Activated T-helper 1 cell treated with anti-CD3 and anti-CD28 coated beads, Interleukin-12 subunit alpha, Interleukin-12 subunit beta, Interleukin-2, Interleukin-4 antibody, amounts not matched to agents 30 ng/mL and 10 ng/mL and 1 ng/mL, durations not matched to agents 14 hours and 24 hours and 36 hours (primary cell): ENCODE measurements at regions of chr1 and their contacts with region 1.

Region 1: DNA sequence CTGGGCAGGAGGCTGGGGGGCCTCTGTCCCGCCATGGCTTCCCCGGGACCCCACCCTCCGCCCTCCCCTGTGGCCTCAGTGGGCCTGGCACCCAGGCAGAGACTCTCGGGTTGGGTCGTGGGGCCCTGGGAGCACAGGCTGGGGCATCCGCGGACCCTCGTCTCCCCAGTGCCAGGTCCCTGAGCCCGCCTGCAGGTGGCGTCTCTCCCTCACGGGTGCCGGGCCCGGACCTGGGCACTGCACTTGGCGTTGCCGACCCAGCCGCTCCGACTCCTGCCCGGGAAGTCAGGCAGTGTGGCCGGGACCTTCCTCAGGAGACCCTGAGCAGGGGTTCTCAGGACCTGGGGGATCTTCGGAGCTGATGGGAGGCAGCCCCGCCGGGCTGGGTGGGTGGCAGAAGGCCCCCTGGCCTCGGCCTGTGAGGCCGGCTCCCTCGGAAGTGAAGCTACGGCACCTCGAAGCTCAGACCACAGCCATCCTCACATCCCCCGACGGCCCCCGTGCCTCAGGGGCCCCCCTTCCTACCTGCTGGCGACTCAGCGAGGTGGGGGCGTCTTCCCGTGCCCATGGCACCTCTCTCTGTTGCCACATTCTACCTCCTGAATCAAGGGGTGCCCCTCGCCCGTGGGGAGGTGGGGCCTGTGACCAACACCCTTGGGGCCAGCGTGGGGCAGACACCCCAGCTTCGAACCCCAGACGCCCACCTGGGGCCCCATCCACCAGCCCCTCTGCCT is 6.4 kb upstream of the C1orf159 start:
- DNase-seq: peak; percentile 80
- H3K4me3 Mint-ChIP-seq: no peak overlapping the region
- H3K27ac Mint-ChIP-seq: no peak overlapping the region
- H3K4me1 Mint-ChIP-seq: peaks cover 5% of the 10 kb centered on the region
- H3K27me3 Mint-ChIP-seq: peaks cover 11% of the 10 kb centered on the region

Region 2: GRCh38 chr1:1079408-1080121 is 42.7 kb before region 1 on chr1:
- intact Hi-C with region 1: no loop called
- DNase-seq: no peak
- H3K4me3 Mint-ChIP-seq: no peak overlapping the region
- H3K27ac Mint-ChIP-seq: no peak overlapping the region
- H3K4me1 Mint-ChIP-seq: no peaks in the 10 kb centered on the region
- H3K27me3 Mint-ChIP-seq: no peaks in the 10 kb centered on the region

Region 3: DNA sequence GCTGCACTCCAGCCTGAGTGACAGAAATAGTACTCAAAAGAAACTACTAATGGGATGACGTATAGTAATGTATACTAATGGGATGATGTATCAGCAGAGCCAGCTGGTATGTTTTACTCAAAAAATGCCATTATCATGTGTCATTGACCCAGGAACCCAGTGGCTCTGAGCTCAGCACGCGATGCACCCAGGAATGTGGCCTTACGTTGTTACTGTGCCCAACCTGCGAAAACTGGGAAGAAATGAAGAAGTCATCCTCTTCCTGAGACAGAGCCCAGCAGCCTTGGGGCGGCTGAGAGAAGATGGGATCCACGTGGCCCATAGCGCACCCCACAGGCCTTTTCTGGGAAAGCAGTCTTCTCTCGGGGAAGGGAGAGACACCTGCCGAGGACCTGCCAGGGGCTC is 142.6 kb after region 1 on chr1:
- intact Hi-C with region 1: loop called (anchors 2 kb)
- DNase-seq: no peak
- H3K4me3 Mint-ChIP-seq: no peak overlapping the region
- H3K27ac Mint-ChIP-seq: no peak overlapping the region
- H3K4me1 Mint-ChIP-seq: peaks cover 13% of the 10 kb centered on the region
- H3K27me3 Mint-ChIP-seq: no peaks in the 10 kb centered on the region

Region 4: GRCh38 chr1:1406817-1407635 is 284.8 kb after region 1 on chr1 and contains the start of gene MRPL20:
- intact Hi-C with region 1: no loop called
- DNase-seq: peak; percentile 96
- H3K4me3 Mint-ChIP-seq: peak within 1 kb of the TSS; percentile 95
- H3K27ac Mint-ChIP-seq: peak within 1 kb of the TSS; percentile 94
- H3K4me1 Mint-ChIP-seq: peaks cover 15% of the 10 kb centered on the region
- H3K27me3 Mint-ChIP-seq: peaks cover 2% of the 10 kb centered on the region
- total RNA-seq, gene MRPL20: 184 and 205 TPM in 2 replicates